ENCODE measurements at regions of chr5 and their contacts with region 1.

Region 1: GRCh38 chr5:145825751-145826180 is 9.4 kb downstream of the PRELID2 start:
- DNase-seq: peak; percentile 76
- H3K4me3 Mint-ChIP-seq: no peak overlapping the region
- H3K27ac Mint-ChIP-seq: no peak overlapping the region
- H3K4me1 Mint-ChIP-seq: peaks cover 26% of the 10 kb centered on the region
- H3K27me3 Mint-ChIP-seq: no peaks in the 10 kb centered on the region
- CTCF ChIP-seq: peak; percentile 97

Region 2: GRCh38 chr5:145347026-145347616 is 478.6 kb before region 1 on chr5:
- CTCF ChIA-PET with region 1: interaction called, 8 read pairs
- POLR2A ChIA-PET with region 1: no interaction called
- intact Hi-C with region 1: loop called (anchors 5 kb)
- DNase-seq: peak; percentile 66
- H3K4me3 Mint-ChIP-seq: no peak overlapping the region
- H3K27ac Mint-ChIP-seq: no peak overlapping the region
- H3K4me1 Mint-ChIP-seq: peaks cover 11% of the 10 kb centered on the region
- H3K27me3 Mint-ChIP-seq: no peaks in the 10 kb centered on the region
- CTCF ChIP-seq: peak; percentile 88

Region 3: GRCh38 chr5:145697251-145697990 is 128.3 kb before region 1 on chr5:
- CTCF ChIA-PET with region 1: interaction called, 44 read pairs
- POLR2A ChIA-PET with region 1: interaction called, 4 read pairs
- intact Hi-C with region 1: loop called (anchors 1 kb)
- DNase-seq: peak; percentile 75
- H3K4me3 Mint-ChIP-seq: no peak overlapping the region
- H3K27ac Mint-ChIP-seq: no peak overlapping the region
- H3K4me1 Mint-ChIP-seq: no peaks in the 10 kb centered on the region
- H3K27me3 Mint-ChIP-seq: no peaks in the 10 kb centered on the region
- CTCF ChIP-seq: peak; percentile 68

Region 4: GRCh38 chr5:145840458-145841132 is 14.8 kb after region 1 on chr5:
- CTCF ChIA-PET with region 1: interaction called, 37 read pairs
- POLR2A ChIA-PET with region 1: interaction called, 7 read pairs
- intact Hi-C with region 1: no loop called
- DNase-seq: no peak
- H3K4me3 Mint-ChIP-seq: no peak overlapping the region
- H3K27ac Mint-ChIP-seq: no peak overlapping the region
- H3K4me1 Mint-ChIP-seq: peaks cover 3% of the 10 kb centered on the region
- H3K27me3 Mint-ChIP-seq: no peaks in the 10 kb centered on the region
- CTCF ChIP-seq: no peak

Region 5: DNA sequence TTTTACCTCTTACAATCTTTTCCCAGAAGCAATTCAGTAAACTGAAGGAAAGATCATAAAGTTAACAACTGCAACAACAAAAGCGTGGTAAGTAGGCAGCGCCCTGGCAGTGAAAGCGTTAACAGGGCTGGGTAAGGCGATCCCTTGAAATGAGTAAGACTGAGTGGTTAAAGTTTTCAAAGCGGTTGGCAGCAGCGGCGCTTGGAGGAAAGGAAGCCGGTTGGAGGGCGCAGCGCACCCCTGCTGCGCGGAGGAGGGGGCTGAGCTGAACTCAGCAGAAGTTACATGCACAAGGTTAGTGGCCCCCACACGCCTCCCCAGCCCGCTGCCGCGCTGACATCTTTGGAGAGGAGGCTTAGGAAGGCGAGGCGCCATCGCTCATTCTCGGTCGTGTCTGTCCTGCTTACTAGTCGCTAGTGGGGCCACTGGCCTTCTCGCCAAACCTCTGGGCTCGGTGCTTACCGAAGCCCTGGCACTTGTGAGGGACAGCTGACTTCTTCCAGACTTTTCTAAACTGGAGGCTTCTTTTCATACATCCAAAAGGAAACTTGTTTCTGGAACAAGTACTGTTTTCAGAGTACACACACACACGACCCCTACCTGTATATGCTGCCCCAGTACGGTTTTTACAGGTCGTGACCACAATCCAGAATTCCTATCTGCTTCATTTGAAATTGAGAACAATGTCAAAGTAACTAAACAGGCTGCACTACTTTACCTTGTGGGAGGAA is 110.8 kb after region 1 on chr5 and contains the start of gene SH3RF2:
- CTCF ChIA-PET with region 1: interaction called, 14 read pairs
- POLR2A ChIA-PET with region 1: interaction called, 27 read pairs
- intact Hi-C with region 1: no loop called
- DNase-seq: peak; percentile 94
- H3K4me3 Mint-ChIP-seq: peak within 1 kb of the TSS; percentile 87
- H3K27ac Mint-ChIP-seq: peak within 1 kb of the TSS; percentile 82
- H3K4me1 Mint-ChIP-seq: peaks cover 62% of the 10 kb centered on the region
- H3K27me3 Mint-ChIP-seq: no peaks in the 10 kb centered on the region
- CTCF ChIP-seq: no peak
- total RNA-seq, gene SH3RF2: 14.9 and 29.6 TPM in 2 replicates

Measured in MCF 10A (cell line).